ENCODE measurements at regions of chr10 and their contacts with region 1.

Region 1: GRCh38 chr10:784403-785088 is 95.1 kb upstream of the DIP2C start:
- DNase-seq: peak in 1 of 2 donors; percentile 88
- H3K4me3 ChIP-seq: peak overlapping the region; percentile 11 to 27
- H3K27ac ChIP-seq: no peak overlapping the region
- H3K4me1 ChIP-seq: peaks cover 25% of the 10 kb centered on the region
- H3K27me3 ChIP-seq: no peaks in the 10 kb centered on the region
- CTCF ChIP-seq: no peak
- POLR2A ChIP-seq: no peak

Region 2: GRCh38 chr10:500876-501275 is 283.7 kb before region 1 on chr10:
- intact Hi-C with region 1: loop called (anchors 10 kb)
- DNase-seq: no peak
- H3K4me3 ChIP-seq: no peak overlapping the region
- H3K27ac ChIP-seq: no peak overlapping the region
- H3K4me1 ChIP-seq: peaks cover 24% of the 10 kb centered on the region
- H3K27me3 ChIP-seq: no peaks in the 10 kb centered on the region
- CTCF ChIP-seq: no peak
- POLR2A ChIP-seq: no peak

Region 3: GRCh38 chr10:576130-576465 is 208.4 kb before region 1 on chr10:
- intact Hi-C with region 1: loop called (anchors 10 kb)
- DNase-seq: no peak
- H3K4me3 ChIP-seq: no peak overlapping the region
- H3K27ac ChIP-seq: no peak overlapping the region
- H3K4me1 ChIP-seq: peaks cover 35% of the 10 kb centered on the region
- H3K27me3 ChIP-seq: no peaks in the 10 kb centered on the region
- CTCF ChIP-seq: no peak
- POLR2A ChIP-seq: no peak

Region 4: GRCh38 chr10:1874533-1874932 is 1090.0 kb after region 1 on chr10:
- intact Hi-C with region 1: no loop called
- DNase-seq: no peak
- H3K4me3 ChIP-seq: no peak overlapping the region
- H3K27ac ChIP-seq: no peak overlapping the region
- H3K4me1 ChIP-seq: no peaks in the 10 kb centered on the region
- H3K27me3 ChIP-seq: no peaks in the 10 kb centered on the region
- CTCF ChIP-seq: no peak
- POLR2A ChIP-seq: no peak

Measured in vagina (tissue), 2 donors.